ENCODE measurements at regions of chr16 and their contacts with region 1.

Region 1: DNA sequence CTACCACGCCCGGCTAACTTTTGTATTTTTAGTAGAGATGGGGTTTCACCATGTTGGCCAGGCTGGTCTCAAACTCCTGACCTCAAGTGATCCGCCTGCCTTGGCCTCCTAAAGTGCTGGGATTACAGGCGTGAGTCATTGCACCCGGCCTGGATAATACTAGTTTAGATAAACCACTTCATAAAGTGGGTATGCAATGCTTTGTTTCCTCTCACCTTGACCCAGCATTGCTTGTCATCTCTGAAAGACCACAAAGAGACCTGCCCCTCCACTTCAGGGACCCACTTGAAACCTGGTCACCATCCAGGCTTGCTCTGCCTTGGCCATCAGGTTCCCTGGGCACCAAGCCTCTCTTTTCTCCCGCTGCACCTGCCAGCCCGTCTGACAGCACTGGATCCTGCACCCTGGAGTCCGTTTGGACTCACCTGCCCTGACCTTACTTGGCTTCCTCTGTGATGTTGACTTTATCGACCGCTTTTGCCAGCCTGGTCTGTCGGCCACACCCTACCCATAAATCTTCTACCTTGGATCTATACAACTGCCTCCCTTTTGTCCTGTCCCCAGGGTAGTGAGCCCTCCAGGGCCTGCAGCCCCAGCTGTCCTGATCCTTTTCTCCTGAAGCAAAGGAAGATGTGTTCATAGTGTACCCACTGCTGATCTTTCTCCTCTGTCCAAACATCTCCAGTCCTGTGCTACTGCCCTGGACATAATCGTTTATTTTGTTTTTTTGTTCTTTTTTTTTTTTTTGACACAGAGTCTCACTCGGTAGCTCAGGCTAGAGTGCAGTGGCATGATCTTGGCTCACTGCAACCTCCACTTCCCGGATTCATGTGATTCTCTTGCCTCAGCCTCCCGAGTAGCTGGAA is 12.7 kb upstream of the ZG16 start:
- DNase-seq: no peak
- ATAC-seq: no peak

Region 2: DNA sequence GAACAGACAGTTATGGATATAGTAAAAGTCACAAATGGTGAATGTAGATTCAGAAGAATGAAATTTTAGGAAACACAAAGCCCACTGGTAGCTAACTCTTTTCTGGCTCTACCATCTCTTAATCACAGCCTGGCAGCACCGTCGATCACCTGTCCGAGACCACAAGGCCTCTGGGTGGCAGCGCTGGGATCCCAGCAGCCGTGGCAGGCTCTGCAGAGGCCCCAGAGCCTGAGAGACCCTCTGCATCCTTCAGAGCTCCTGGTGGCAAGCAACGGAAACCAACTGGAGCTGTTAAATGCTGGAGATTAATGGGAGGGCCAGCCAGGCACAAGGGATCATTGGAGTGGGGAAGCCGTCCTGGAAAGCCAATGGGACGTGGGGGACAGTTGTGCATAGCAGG is 754.3 kb before region 1 on chr16:
- intact Hi-C with region 1: loop called in 1 of 2 experiments (anchors 10 kb)
- DNase-seq: no peak
- ATAC-seq: no peak

Region 3: DNA sequence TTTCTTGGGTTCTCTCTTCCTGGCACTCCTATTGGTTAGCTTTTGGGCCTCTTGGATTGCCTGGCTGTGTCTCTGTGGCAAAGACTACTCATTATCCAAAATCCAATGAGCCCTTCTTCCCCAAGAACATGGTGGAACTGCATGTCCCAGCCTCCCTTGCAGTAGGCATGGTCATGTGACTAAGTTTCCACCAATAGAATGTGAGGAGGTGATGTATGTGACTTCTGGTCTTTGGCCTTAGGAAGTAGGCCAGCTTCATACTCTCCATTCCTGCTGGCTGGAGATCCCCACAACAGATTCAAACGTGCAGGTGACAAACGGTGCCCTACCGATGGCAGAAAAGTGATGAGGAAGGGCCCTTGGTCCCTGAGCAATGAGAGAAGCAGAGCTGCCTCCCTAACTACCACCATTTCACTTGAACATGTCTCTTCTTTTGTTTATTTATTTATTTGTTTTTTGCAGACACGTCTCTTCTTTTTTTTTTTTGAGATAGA is 119.7 kb before region 1 on chr16:
- intact Hi-C with region 1: no loop called
- DNase-seq: no peak
- ATAC-seq: no peak